Activated T-helper 1 cell treated with anti-CD3 and anti-CD28 coated beads, Interleukin-12 subunit alpha, Interleukin-12 subunit beta, Interleukin-2, Interleukin-4 antibody, amounts not matched to agents 30 ng/mL and 10 ng/mL and 1 ng/mL, durations not matched to agents 14 hours and 24 hours and 36 hours (primary cell): ENCODE measurements at regions of chr12 and their contacts with region 1.

Region 1: DNA sequence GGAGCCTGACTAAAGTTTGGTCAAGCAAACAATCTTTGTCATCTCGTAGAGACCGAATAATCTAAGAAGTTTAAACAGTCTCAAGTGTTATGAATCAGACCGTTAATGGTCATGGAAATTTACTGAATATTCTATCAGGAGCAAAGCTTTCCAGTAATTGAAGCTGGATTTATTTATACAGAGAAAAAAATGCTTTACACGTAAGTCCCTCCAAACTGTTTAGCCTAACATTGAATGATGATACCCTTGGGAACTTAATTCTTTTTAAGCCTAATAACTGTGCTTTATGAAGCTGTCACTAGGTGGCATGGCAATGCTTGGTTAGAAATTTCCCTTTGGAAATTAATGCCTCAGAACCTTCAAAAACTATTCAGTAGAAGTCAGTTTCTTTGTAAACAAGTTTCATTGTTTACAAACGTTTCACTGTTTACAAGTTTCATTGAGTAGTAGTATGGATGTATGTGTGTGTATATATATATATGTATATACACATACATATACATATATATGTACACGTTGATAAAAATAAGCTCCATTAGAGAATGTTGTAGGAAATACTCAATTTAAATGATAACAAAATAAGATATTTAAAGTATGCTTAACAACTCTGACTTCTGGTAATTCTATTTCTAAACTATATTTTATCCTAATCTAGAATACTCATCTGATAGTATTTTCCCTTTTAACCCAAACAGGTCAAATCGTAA is 32.1 kb downstream of the DEPDC4 start:
- DNase-seq: no peak
- H3K4me3 Mint-ChIP-seq: no peak overlapping the region
- H3K27ac Mint-ChIP-seq: no peak overlapping the region
- H3K4me1 Mint-ChIP-seq: no peaks in the 10 kb centered on the region
- H3K27me3 Mint-ChIP-seq: peaks cover 2% of the 10 kb centered on the region

Region 2: DNA sequence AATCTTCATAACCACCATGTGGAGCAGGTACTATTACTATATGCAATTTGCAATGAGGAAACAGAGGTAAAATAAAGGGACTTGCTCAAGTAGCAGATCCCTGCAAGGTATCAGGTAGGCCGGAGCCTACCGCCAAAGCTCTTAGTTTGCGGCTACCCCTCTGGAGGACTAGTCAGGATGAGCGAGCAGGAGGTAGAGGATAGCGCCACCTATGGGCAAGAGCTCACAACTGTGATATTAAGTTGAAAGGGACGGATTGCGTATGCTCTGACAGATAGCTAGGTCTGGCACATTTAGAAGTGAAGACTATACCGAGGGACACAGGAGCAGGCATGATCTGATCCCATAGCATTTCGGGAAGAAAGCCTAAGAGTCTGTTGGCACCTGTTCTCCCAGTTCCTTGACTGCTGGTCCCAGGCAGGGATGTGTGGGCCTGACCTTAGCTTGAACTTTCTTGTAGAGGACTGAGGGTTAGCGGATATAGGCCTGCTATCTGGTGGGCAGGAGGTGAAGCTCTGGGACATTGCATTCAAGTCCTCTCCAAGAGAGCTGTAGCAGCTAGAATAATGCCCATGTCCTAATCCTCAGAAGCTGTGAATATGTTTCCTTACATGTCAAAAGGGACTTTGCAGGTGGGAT is 170.1 kb after region 1 on chr12:
- intact Hi-C with region 1: loop called (anchors 1 kb)
- DNase-seq: no peak
- H3K4me3 Mint-ChIP-seq: no peak overlapping the region
- H3K27ac Mint-ChIP-seq: no peak overlapping the region
- H3K4me1 Mint-ChIP-seq: no peaks in the 10 kb centered on the region
- H3K27me3 Mint-ChIP-seq: peaks cover 6% of the 10 kb centered on the region

Region 3: GRCh38 chr12:100668945-100669536 is 434.3 kb after region 1 on chr12:
- intact Hi-C with region 1: loop called (anchors 2 kb)
- DNase-seq: peak; percentile 10
- H3K4me3 Mint-ChIP-seq: no peak overlapping the region
- H3K27ac Mint-ChIP-seq: no peak overlapping the region
- H3K4me1 Mint-ChIP-seq: no peaks in the 10 kb centered on the region
- H3K27me3 Mint-ChIP-seq: no peaks in the 10 kb centered on the region

Region 4: GRCh38 chr12:100741084-100741711 is 506.4 kb after region 1 on chr12:
- intact Hi-C with region 1: loop called (anchors 1 kb)
- DNase-seq: no peak
- H3K4me3 Mint-ChIP-seq: no peak overlapping the region
- H3K27ac Mint-ChIP-seq: no peak overlapping the region
- H3K4me1 Mint-ChIP-seq: no peaks in the 10 kb centered on the region
- H3K27me3 Mint-ChIP-seq: no peaks in the 10 kb centered on the region